ENCODE measurements at regions of chr7 and their contacts with region 1.

Region 1: GRCh38 chr7:108197371-108198091 is 67.4 kb upstream of the LAMB4 start:
- DNase-seq: no peak
- H3K4me3 ChIP-seq: no peak overlapping the region
- H3K4me3 Mint-ChIP-seq: no peak overlapping the region
- H3K27ac Mint-ChIP-seq: no peak overlapping the region
- H3K4me1 ChIP-seq: no peaks in the 10 kb centered on the region
- H3K4me1 Mint-ChIP-seq: no peaks in the 10 kb centered on the region
- H3K27me3 ChIP-seq: no peaks in the 10 kb centered on the region
- H3K27me3 Mint-ChIP-seq: no peaks in the 10 kb centered on the region
- CTCF ChIP-seq: no peak

Region 2: DNA sequence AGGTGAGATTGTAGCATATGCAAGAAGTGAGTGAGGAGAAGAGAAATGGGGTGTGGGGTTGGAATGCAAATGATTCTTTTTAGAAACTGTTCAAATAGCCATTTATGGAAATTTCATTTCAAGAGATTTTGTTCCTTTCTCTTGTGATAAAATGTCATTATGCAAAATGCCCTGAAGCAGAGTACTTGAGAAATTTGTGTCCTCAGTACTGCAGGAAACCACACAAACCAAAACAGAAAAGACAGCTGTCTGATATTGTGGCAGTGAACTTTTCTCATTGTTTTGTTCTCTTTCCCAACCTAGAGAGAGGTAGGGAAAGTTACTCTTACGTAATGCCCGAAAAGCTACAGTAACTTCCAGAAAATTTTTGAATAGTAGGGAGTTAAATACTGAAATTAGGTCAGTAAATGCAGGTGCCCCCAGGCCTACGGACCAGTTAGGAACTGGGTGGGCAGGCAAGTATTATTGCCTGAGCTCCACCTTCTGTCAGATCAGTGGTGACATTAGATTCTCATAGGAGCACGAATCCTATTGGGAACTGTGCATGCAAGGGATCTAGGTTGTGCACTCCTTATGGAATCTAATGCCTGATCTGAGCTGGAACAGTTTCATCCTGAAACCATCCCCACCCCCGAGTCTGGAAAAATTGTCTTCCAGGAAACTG is 272.6 kb before region 1 on chr7:
- CTCF ChIA-PET with region 1: no interaction called
- POLR2A ChIA-PET with region 1: no interaction called
- intact Hi-C with region 1: no loop called
- DNase-seq: no peak
- H3K4me3 ChIP-seq: no peak overlapping the region
- H3K4me3 Mint-ChIP-seq: no peak overlapping the region
- H3K27ac Mint-ChIP-seq: no peak overlapping the region
- H3K4me1 ChIP-seq: no peaks in the 10 kb centered on the region
- H3K4me1 Mint-ChIP-seq: peaks cover 5% of the 10 kb centered on the region
- H3K27me3 ChIP-seq: no peaks in the 10 kb centered on the region
- H3K27me3 Mint-ChIP-seq: no peaks in the 10 kb centered on the region
- CTCF ChIP-seq: no peak

Region 3: DNA sequence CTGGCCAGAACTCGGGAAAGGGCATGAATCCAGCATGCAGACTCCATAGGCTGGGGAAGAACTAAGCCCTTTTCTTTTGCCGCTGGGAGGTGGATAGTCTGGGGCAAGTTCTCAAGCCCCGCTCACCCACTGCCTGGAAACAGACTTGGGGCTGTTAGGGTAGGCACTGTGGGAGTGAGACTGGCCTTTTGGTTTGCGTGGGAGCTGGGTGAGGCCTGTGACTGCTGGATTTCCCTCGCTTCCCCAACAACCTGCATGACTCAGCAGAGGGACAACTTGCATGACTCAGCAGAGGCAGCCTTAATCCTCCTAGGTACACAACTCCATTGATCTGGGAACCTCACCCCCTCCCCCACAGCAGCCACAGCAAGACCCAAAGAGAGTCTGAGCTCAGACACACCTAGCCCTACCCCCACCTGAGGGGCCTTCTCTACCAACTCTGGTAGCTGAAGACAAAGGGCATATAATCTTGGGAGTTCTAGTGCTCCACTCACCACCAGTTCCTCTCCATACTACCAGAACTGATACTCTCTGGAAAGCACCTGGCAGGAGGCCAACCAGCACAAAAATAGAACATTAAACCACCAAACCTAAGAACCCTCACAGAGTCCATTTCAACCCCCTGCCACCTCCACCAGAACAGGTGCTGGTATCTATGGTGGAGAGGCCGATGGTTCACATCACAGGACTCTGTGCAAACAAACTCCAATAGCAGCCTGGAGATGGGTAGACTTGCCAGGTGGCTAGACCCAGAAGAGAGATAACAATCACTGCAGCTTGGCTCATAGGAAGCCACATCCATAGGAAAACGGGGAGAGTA is 14.1 kb after region 1 on chr7:
- CTCF ChIA-PET with region 1: interaction called, 10 read pairs
- POLR2A ChIA-PET with region 1: no interaction called
- intact Hi-C with region 1: no loop called
- DNase-seq: peak; percentile 78 to 86
- H3K4me3 ChIP-seq: no peak overlapping the region
- H3K4me3 Mint-ChIP-seq: no peak overlapping the region
- H3K27ac Mint-ChIP-seq: peak overlapping the region; percentile 85
- H3K4me1 ChIP-seq: peaks cover 31% of the 10 kb centered on the region
- H3K4me1 Mint-ChIP-seq: peaks cover 35% of the 10 kb centered on the region
- H3K27me3 ChIP-seq: no peaks in the 10 kb centered on the region
- H3K27me3 Mint-ChIP-seq: no peaks in the 10 kb centered on the region
- CTCF ChIP-seq: no peak